ENCODE measurements at regions of chr2 and their contacts with region 1.

Region 1: GRCh38 chr2:149827585-149828126 is 240.1 kb upstream of the MMADHC start:
- DNase-seq: peak; percentile 86
- H3K4me3 ChIP-seq: no peak overlapping the region
- H3K27ac ChIP-seq: no peak overlapping the region
- H3K4me1 ChIP-seq: peaks cover 11% of the 10 kb centered on the region
- H3K27me3 ChIP-seq: no peaks in the 10 kb centered on the region
- CTCF ChIP-seq: no peak
- POLR2A ChIP-seq: no peak

Region 2: DNA sequence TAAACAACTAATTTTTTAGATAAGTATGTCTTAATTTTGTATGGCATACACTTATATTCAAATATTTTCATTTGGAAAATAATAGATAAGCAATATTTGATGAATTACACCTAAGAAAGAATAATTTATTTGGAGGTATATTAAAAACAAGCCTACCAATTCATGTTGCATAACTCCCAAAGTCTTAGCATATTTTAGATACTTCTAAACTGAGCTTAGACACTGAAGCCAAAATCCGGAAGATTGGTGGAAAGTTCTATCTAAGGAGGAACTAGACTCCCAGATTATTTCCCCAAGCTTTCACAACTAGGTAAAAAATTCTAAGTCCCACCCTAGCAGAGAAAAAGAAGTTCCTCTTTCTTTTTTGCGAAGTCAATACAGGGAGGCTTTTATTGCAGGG is 19.1 kb before region 1 on chr2:
- CTCF ChIA-PET with region 1: interaction called, 6 read pairs
- POLR2A ChIA-PET with region 1: no interaction called
- dilution Hi-C with region 1: no loop called
- intact Hi-C with region 1: loop called (anchors 2 kb)
- DNase-seq: no peak
- H3K4me3 ChIP-seq: no peak overlapping the region
- H3K27ac ChIP-seq: no peak overlapping the region
- H3K4me1 ChIP-seq: no peaks in the 10 kb centered on the region
- H3K27me3 ChIP-seq: no peaks in the 10 kb centered on the region
- CTCF ChIP-seq: no peak
- POLR2A ChIP-seq: no peak

Region 3: GRCh38 chr2:149877913-149878312 is 50.3 kb after region 1 on chr2:
- CTCF ChIA-PET with region 1: no interaction called
- POLR2A ChIA-PET with region 1: no interaction called
- dilution Hi-C with region 1: no loop called
- intact Hi-C with region 1: no loop called
- DNase-seq: peak; percentile 69
- H3K4me3 ChIP-seq: no peak overlapping the region
- H3K27ac ChIP-seq: no peak overlapping the region
- H3K4me1 ChIP-seq: peaks cover 10% of the 10 kb centered on the region
- H3K27me3 ChIP-seq: no peaks in the 10 kb centered on the region
- CTCF ChIP-seq: no peak
- POLR2A ChIP-seq: no peak